ENCODE measurements at regions of chr2 and their contacts with region 1.

Region 1: DNA sequence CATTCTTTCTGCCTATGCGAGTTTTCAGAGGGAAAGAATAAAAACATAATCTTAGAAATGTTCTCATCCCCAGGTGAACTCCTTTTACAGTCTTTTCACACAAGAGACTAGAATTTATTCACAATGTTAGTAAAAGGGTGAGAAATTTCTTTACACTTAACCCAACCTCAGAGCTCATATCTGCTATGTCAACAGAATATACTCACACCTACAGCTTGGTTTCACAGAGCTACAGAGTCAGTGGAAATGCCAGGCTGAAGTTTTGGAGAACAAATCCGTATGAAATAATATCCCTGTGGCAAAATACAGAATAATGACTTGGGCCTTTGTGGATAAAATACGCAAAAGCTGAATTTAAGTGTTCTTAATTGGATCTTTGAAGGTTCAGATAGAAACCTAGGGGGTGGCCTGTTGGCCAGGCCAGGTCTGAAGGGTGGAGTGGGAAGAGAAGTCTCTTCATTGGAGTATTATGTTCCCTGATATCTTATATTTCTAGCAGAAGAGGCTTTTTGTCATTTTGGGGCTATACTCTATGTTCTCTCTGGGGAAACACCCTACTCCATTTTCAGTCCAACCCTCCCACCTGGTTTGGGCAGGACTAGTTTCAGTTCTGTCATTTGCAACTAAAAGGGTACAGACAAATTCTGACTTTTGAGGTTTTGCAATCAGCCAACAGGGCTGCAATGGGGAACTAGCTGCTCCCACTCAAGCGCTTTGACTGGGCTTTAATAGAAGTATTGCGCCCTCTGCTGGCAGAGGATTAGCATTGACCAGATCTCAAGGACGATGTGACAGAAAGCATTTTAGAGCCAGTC is 25.7 kb downstream of the FBXO48 start:
- DNase-seq: peak; percentile 66
- H3K4me3 ChIP-seq: no peak overlapping the region
- H3K27ac ChIP-seq: no peak overlapping the region
- H3K27me3 ChIP-seq: peaks cover 4% of the 10 kb centered on the region
- CTCF ChIP-seq: peak; percentile 87

Region 2: DNA sequence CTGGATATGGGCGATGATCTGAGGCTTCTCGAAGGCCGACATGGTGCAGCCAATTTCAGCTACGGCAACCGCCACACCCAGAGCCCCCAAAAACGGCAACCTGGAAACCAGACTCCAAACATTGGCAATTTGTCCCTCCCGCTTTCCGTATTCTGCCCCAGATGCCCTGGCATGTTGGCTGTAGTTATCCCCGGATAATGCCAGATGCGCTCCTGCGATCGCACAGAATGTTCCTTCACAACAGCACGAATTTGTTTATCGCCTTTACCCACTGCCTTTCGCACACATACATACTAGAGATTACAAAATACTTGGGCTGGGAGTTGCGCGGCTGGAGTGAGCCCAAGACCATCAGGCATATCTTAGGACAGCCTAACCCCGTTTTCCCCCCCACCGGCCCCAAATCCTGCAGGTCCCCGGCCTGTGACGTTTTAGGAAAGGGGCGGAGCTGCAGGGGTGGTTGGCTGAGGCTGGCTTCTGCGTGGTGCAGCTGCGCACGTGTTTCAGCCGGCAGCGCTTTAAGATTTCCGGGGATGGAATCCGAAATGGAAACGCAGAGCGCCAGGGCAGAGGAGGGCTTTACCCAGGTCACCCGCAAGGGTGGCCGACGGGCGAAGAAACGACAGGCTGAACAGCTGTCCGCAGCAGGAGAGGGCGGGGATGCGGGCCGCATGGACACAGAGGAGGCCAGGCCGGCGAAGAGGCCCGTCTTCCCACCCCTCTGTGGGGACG is 283.8 kb before region 1 on chr2 and contains the start of gene PNO1:
- CTCF ChIA-PET with region 1: interaction called, 11 read pairs
- POLR2A ChIA-PET with region 1: no interaction called
- DNase-seq: peak; percentile 87
- H3K4me3 ChIP-seq: peak within 1 kb of the TSS; percentile 97
- H3K27ac ChIP-seq: peak within 1 kb of the TSS; percentile 96
- H3K27me3 ChIP-seq: no peaks in the 10 kb centered on the region
- CTCF ChIP-seq: no peak
- polyA plus RNA-seq, gene PNO1: 11.9 and 14.2 TPM in 2 replicates

Region 3: DNA sequence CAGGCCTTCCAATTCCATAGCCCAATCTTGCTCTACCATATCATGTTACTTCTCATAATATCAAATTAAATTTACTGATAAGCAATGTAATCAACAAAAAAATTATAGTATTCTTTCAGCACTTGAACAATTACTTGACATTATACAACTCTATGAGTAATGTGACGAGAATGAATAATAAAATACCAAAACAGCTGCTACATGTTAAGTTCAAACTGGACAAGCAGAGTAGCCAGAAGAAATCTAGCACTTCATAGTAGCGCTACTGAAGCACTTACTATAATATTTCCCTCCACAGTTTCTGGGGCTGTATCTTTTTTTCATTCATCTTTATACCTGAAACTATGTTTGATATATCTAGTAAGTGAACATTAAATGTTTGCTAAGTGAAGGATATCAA is 204.0 kb before region 1 on chr2:
- CTCF ChIA-PET with region 1: no interaction called
- POLR2A ChIA-PET with region 1: no interaction called
- DNase-seq: no peak
- H3K4me3 ChIP-seq: no peak overlapping the region
- H3K27ac ChIP-seq: no peak overlapping the region
- H3K27me3 ChIP-seq: no peaks in the 10 kb centered on the region
- CTCF ChIP-seq: no peak

Region 4: GRCh38 chr2:68295516-68295915 is 145.9 kb before region 1 on chr2:
- CTCF ChIA-PET with region 1: interaction called, 12 read pairs
- POLR2A ChIA-PET with region 1: no interaction called
- DNase-seq: no peak
- H3K4me3 ChIP-seq: no peak overlapping the region
- H3K27ac ChIP-seq: no peak overlapping the region
- H3K27me3 ChIP-seq: no peaks in the 10 kb centered on the region
- CTCF ChIP-seq: no peak

Region 5: DNA sequence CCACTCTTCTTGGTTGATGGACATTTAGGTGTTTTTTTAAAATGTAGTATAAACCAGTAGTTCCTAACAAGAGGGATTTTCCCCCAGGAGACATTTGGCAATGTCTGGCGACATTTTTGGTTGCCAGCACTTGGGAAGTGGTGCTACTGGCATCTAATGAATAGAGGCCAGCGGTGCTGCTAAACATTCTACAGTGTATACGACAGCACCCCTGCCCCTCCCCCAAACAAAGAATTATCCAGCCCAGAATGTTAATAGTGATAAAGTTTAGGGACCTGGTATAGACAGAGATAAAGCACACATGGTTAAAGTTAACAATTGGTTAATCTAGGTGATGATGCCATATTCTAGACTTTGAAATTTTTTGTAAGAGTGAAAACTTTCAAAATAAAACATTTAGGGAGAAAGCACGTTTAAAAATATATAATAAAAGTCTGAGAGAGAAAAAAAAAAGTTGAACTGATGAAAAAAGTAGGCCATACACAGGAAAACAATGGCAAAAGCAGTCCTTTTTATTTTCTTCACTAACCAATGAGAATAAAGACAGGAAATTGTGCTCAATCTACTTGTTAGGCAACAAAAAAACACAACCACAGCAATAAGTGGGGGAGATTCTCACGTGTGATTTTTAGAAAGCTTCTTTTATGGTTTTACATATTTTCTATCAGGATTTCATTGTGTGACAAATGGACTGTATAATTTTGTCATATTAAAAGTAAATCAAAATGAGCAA is 10.9 kb after region 1 on chr2:
- CTCF ChIA-PET with region 1: interaction called, 15 read pairs
- POLR2A ChIA-PET with region 1: no interaction called
- DNase-seq: no peak
- H3K4me3 ChIP-seq: no peak overlapping the region
- H3K27ac ChIP-seq: no peak overlapping the region
- H3K27me3 ChIP-seq: peaks cover 6% of the 10 kb centered on the region
- CTCF ChIP-seq: no peak

Measured in AG04450 (cell line).